ENCODE measurements at regions of chr9 and their contacts with region 1.

Region 1: DNA sequence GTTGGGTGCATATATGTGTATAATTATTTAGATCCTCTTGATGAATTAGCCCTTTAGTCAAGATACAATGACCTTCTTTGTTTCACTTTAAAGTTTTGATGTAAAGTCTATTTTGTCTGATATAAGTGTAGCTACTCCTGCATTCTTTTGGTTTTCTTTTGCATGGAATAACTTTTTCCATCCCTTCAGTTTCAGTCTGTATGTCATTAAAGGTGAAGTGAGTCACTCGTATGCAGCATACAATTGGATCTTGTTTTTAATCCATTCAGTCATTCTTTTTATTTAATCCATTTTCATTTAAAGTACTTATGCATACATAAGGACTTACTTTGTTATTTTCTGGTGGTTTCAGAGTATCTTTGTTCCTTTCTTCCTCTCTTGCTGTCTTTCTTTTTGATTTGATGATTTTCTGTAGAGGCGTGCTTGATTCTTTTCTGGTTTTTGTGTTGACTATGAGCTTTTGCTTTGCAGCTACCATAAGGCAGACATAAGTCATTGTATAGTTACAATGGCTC is 36.3 kb upstream of the FAM120A start:
- DNase-seq: no peak
- ATAC-seq: no peak
- H3K4me3 ChIP-seq: no peak overlapping the region
- H3K27ac ChIP-seq: no peak overlapping the region
- H3K4me1 ChIP-seq: no peaks in the 10 kb centered on the region
- H3K27me3 ChIP-seq: peaks cover 0 to 8% (median 0%) of the 10 kb centered on the region in 7 donors
- CTCF ChIP-seq: no peak

Region 2: DNA sequence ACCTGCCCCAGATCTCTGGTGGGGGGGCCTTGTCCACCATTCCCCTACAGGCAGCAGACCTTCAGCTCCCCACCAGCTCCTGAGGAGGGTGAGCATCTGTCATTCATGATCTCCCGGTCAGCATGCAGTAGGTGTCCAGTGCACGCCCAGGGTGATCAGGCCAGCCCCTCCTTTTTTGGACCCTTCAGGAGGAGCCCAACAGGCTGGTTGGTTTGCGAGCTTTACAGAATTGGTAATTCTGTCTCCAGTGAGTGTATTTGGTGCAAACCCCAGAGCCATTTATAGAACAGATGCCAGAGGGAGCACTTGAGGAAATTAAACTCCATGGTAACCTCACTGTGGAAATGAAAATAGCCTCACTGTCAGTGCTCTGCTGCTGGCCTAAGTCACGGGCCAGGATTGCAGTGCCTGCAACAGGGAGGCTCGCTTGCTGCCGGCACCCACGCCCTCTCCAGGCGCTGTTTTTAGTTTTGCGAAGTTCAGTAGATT is 207.9 kb before region 1 on chr9:
- intact Hi-C with region 1: no loop called
- DNase-seq: peak; percentile 52 to 68
- ATAC-seq: peak; percentile 54 to 80 (median 74)
- H3K4me3 ChIP-seq: peak overlapping the region in 5 of 10 donors; percentile 8 to 31 (median 28)
- H3K27ac ChIP-seq: peak overlapping the region; percentile 35 to 92 (median 83)
- H3K4me1 ChIP-seq: peaks cover 34 to 74% (median 58%) of the 10 kb centered on the region in 9 donors
- H3K27me3 ChIP-seq: no peaks in the 10 kb centered on the region
- CTCF ChIP-seq: peak in 3 of 9 donors; percentile 28 to 38 (median 31)

Region 3: GRCh38 chr9:93357649-93358048 is 57.6 kb before region 1 on chr9:
- intact Hi-C with region 1: loop called in 1 of 10 experiments (anchors 10 kb)
- DNase-seq: no peak
- ATAC-seq: no peak
- H3K4me3 ChIP-seq: no peak overlapping the region
- H3K27ac ChIP-seq: no peak overlapping the region
- H3K4me1 ChIP-seq: no peaks in the 10 kb centered on the region
- H3K27me3 ChIP-seq: no peaks in the 10 kb centered on the region
- CTCF ChIP-seq: no peak

Region 4: GRCh38 chr9:93369686-93370085 is 45.5 kb before region 1 on chr9:
- intact Hi-C with region 1: no loop called
- DNase-seq: no peak
- ATAC-seq: no peak
- H3K4me3 ChIP-seq: no peak overlapping the region
- H3K27ac ChIP-seq: no peak overlapping the region
- H3K4me1 ChIP-seq: no peaks in the 10 kb centered on the region
- H3K27me3 ChIP-seq: no peaks in the 10 kb centered on the region
- CTCF ChIP-seq: no peak

Region 5: GRCh38 chr9:94086486-94087345 is 671.5 kb after region 1 on chr9:
- intact Hi-C with region 1: no loop called
- DNase-seq: no peak
- ATAC-seq: peak in 4 of 8 donors; percentile 35 to 82 (median 63)
- H3K4me3 ChIP-seq: no peak overlapping the region
- H3K27ac ChIP-seq: no peak overlapping the region
- H3K4me1 ChIP-seq: peaks cover 0 to 52% (median 32%) of the 10 kb centered on the region in 9 donors
- H3K27me3 ChIP-seq: no peaks in the 10 kb centered on the region
- CTCF ChIP-seq: no peak